Naive thymus-derived CD8-positive, alpha-beta T cell (primary cell): ENCODE measurements at regions of chr19 and their contacts with region 1.

Region 1: GRCh38 chr19:10717356-10718204 is at the start of gene DNM2:
- DNase-seq: peak; percentile 91 to 99 (median 96)
- ATAC-seq: peak; percentile 87 to 88
- H3K4me3 Mint-ChIP-seq: peak within 1 kb of the TSS; percentile 85 to 97 (median 93)
- H3K27ac Mint-ChIP-seq: peak within 1 kb of the TSS; percentile 76 to 96 (median 92)
- H3K4me1 Mint-ChIP-seq: peaks cover 17 to 48% (median 42%) of the 10 kb centered on the region in 4 donors
- H3K27me3 Mint-ChIP-seq: no peaks in the 10 kb centered on the region
- polyA plus RNA-seq, gene DNM2: 45.0 to 91.4 (median 60.9) TPM

Region 2: DNA sequence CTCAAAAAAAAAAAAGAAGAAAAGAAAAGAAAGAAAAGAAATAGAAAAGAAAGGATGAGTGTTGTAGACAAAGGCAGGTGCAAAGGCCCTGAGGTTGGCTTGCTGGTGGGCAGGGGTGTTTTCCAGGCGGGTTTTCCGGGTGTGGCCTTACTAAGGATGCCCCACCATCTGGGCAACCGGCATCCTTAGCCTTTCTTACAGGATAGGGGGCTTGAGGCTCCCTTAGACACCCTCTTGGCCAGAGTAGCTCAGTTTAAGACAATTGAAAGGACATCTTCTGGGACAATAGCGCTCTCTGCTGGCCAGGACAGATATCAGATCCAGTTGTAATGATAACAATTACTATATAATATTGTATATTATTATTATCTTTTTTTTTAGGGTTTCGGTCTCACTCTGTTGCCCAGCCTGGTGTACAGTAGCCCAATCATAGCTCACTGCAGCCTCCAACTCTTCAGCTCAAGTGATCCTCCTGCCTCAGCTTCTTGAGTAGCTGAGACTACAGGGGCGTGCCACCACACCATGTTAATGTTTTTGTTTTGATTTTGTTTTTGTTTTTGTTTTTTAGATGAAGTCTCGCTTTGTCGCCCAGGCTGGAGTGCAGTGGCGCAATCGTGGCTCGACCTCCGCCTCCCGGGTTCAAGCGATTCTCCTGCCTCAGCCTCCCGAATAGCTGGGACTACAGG is 17.8 kb before region 1 on chr19:
- POLR2A ChIA-PET with region 1: interaction called, 36 read pairs
- DNase-seq: peak; percentile 36 to 79 (median 62)
- ATAC-seq: no peak
- H3K4me3 Mint-ChIP-seq: peak overlapping the region in 2 of 10 donors; percentile 4 to 20
- H3K27ac Mint-ChIP-seq: peak overlapping the region in 1 of 10 donors; percentile 27
- H3K4me1 Mint-ChIP-seq: peaks cover 15 to 33% (median 31%) of the 10 kb centered on the region in 4 donors
- H3K27me3 Mint-ChIP-seq: peaks cover 0 to 4% (median 0%) of the 10 kb centered on the region in 5 donors

Region 3: GRCh38 chr19:10730923-10731322 is 13.3 kb after region 1 on chr19:
- POLR2A ChIA-PET with region 1: interaction called, 62 read pairs
- DNase-seq: peak in 1 of 10 donors; percentile 10
- ATAC-seq: no peak
- H3K4me3 Mint-ChIP-seq: peak overlapping the region; percentile 19 to 86 (median 76)
- H3K27ac Mint-ChIP-seq: peak overlapping the region; percentile 93 to 99 (median 97)
- H3K4me1 Mint-ChIP-seq: peaks cover 14 to 67% (median 59%) of the 10 kb centered on the region in 4 donors
- H3K27me3 Mint-ChIP-seq: no peaks in the 10 kb centered on the region

Region 4: DNA sequence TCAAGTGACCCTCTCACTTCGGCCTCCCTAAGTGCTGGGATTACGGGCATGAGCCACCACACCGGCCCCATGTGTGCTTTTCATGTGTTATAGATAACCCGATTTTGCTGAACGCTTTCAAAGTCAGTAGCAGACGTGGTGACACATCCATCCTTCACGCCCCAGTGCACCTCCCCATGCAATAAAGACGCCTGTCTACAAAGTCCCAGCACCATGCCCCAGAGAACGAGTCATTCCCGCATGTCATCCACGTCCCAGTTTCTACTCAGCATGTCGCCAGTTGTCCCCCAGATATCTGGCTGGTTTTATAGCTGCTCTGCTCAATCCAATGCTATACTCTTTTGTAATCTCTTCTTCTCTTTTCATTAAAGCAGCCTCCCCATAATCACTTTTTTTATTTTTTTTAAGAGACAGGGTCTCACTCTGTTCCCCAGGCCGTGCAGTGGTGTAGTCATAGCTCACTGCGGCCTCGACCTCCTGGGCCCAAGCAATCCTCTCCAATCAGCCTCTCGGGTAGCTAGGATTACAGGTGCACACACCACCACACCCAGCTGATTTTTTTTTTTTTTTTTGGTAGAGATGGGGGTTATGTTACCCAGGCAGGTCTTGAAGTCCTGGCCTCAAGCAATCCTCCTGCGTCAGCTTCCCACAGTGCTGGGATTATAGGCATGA is 42.8 kb after region 1 on chr19:
- POLR2A ChIA-PET with region 1: interaction called, 58 read pairs
- DNase-seq: peak in 2 of 10 donors; percentile 38 to 39
- ATAC-seq: peak in 1 of 2 donors; percentile 15
- H3K4me3 Mint-ChIP-seq: peak overlapping the region; percentile 64 to 85 (median 81)
- H3K27ac Mint-ChIP-seq: peak overlapping the region; percentile 87 to 98 (median 94)
- H3K4me1 Mint-ChIP-seq: peaks cover 38 to 91% (median 88%) of the 10 kb centered on the region in 4 donors
- H3K27me3 Mint-ChIP-seq: no peaks in the 10 kb centered on the region

Region 5: DNA sequence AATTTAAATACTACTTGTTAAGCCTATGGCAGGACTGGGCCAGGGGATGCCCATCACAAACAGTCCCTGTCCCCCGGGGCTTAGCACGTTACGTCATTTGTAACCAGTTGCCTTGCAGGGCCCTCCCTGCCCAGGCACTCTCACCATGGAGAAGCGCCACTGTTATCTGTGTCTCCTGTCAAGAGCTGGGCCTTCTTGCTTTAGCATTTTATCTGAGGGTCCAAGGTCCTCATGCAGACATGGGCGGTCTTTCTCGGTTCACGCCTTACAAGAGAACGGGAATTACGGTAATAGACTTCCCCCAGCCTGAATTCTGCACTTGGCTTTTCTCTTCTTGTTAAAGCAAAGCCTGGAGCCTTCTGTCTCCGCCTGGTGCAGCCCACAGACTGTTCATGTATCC is 72.3 kb after region 1 on chr19:
- POLR2A ChIA-PET with region 1: no interaction called
- DNase-seq: no peak
- ATAC-seq: no peak
- H3K4me3 Mint-ChIP-seq: no peak overlapping the region
- H3K27ac Mint-ChIP-seq: no peak overlapping the region
- H3K4me1 Mint-ChIP-seq: peaks cover 0 to 4% (median 1%) of the 10 kb centered on the region in 4 donors
- H3K27me3 Mint-ChIP-seq: no peaks in the 10 kb centered on the region

Region 6: GRCh38 chr19:10835754-10836477 is 118.3 kb after region 1 on chr19 and contains the start of gene TMED1:
- POLR2A ChIA-PET with region 1: interaction called, 20 read pairs
- DNase-seq: peak; percentile 87 to 97 (median 94)
- ATAC-seq: peak; percentile 90 to 92
- H3K4me3 Mint-ChIP-seq: peak within 1 kb of the TSS; percentile 95 to 100 (median 97)
- H3K27ac Mint-ChIP-seq: peak within 1 kb of the TSS; percentile 98 to 100 (median 100)
- H3K4me1 Mint-ChIP-seq: peaks cover 8 to 16% (median 15%) of the 10 kb centered on the region in 4 donors
- H3K27me3 Mint-ChIP-seq: no peaks in the 10 kb centered on the region
- polyA plus RNA-seq, gene TMED1: 23.7 to 26.3 (median 25.0) TPM

Region 7: DNA sequence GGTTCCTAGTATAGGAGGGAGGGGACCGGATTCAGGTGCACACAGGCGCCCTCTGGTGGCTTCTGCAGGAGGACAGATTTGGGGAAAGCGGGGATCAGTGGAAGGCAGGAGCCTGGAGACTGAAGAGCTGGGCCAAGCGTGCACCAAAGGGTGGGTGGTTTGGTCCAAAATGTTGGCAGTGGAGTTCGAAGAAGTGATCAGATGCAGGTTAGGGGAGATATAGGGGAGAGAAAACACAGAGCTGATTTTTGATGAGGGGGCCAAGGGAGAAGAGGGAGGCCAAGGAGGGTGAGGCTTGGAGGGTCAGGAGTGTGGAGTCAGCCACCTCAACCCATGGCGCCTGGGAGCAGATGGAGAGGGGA is 146.9 kb after region 1 on chr19:
- POLR2A ChIA-PET with region 1: interaction called, 16 read pairs
- DNase-seq: peak; percentile 63 to 88 (median 75)
- ATAC-seq: peak; percentile 96 to 99
- H3K4me3 Mint-ChIP-seq: peak overlapping the region in 6 of 10 donors; percentile 3 to 55 (median 30)
- H3K27ac Mint-ChIP-seq: peak overlapping the region in 9 of 10 donors; percentile 9 to 92 (median 76)
- H3K4me1 Mint-ChIP-seq: peaks cover 7 to 32% (median 14%) of the 10 kb centered on the region in 4 donors
- H3K27me3 Mint-ChIP-seq: no peaks in the 10 kb centered on the region

Region 8: GRCh38 chr19:12075538-12076139 is 1358.1 kb after region 1 on chr19:
- POLR2A ChIA-PET with region 1: no interaction called
- DNase-seq: no peak
- ATAC-seq: no peak
- H3K4me3 Mint-ChIP-seq: peak overlapping the region in 1 of 10 donors; percentile 15
- H3K27ac Mint-ChIP-seq: no peak overlapping the region
- H3K4me1 Mint-ChIP-seq: peaks cover 0 to 1% (median 0%) of the 10 kb centered on the region in 4 donors
- H3K27me3 Mint-ChIP-seq: no peaks in the 10 kb centered on the region